ENCODE measurements at regions of chr1 and their contacts with region 1.

Region 1: GRCh38 chr1:168637350-168637991 is 61.1 kb downstream of the XCL1 start:
- DNase-seq: peak; percentile 28
- H3K4me3 ChIP-seq: no peak overlapping the region
- H3K27ac ChIP-seq: no peak overlapping the region
- H3K4me1 ChIP-seq: no peaks in the 10 kb centered on the region
- H3K27me3 ChIP-seq: no peaks in the 10 kb centered on the region
- CTCF ChIP-seq: peak; percentile 67 to 74
- POLR2A ChIP-seq: no peak

Region 2: DNA sequence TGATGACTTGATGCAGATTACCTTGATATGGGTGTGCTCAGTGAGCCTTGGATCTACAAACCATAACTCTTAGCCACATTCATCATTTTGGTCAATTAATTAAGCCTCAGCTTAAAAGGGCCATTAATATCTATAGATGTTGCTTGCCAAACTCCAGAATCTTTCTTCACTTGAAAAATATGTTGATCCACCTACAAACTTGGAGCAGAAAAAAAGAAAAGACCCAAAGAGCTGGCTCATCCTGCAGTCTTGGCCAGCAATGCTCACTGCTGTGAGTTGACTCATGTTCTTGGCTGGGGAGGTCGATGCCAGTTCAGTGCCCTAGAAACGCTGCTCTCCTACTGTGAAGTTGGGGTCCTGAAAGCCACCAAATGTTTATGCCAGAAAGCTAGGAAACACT is 16.1 kb after region 1 on chr1:
- CTCF ChIA-PET with region 1: interaction called, 11 read pairs
- POLR2A ChIA-PET with region 1: no interaction called
- dilution Hi-C with region 1: no loop called
- intact Hi-C with region 1: no loop called
- DNase-seq: no peak
- H3K4me3 ChIP-seq: no peak overlapping the region
- H3K27ac ChIP-seq: no peak overlapping the region
- H3K4me1 ChIP-seq: no peaks in the 10 kb centered on the region
- H3K27me3 ChIP-seq: peaks cover 0 to 3% of the 10 kb centered on the region in 2 experiments
- CTCF ChIP-seq: no peak
- POLR2A ChIP-seq: no peak

Region 3: DNA sequence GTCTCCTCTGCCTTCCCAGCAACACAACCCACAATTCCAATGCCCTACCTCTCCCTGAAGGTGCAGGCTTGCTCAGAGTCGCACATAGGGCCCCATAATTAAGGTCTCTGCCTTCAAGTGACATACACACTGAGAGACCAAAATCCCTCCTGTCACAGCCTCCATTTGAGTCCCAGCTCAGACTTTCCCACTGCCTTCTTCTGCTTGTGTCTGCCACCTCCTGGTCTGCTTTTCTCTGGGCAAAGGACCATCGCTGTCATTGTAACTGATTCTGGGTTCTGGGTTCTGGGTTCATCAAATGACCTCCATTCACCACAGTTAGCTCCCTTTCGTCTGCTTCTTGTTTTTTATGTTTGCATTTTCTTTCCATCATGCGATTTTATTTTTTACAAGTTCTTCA is 349.9 kb after region 1 on chr1:
- CTCF ChIA-PET with region 1: no interaction called
- POLR2A ChIA-PET with region 1: no interaction called
- dilution Hi-C with region 1: no loop called
- intact Hi-C with region 1: loop called (anchors 10 kb)
- DNase-seq: no peak
- H3K4me3 ChIP-seq: no peak overlapping the region
- H3K27ac ChIP-seq: no peak overlapping the region
- H3K4me1 ChIP-seq: no peaks in the 10 kb centered on the region
- H3K27me3 ChIP-seq: no peaks in the 10 kb centered on the region
- CTCF ChIP-seq: no peak
- POLR2A ChIP-seq: no peak

Measured in endothelial cell of umbilical vein (primary cell).